Activated naive CD4-positive, alpha-beta T cell treated with anti-CD3 and anti-CD28 coated beads for 36 hours (primary cell): ENCODE measurements at regions of chr18 and their contacts with region 1.

Region 1: GRCh38 chr18:62186774-62187542 is at the starts of genes PIGN and RELCH:
- DNase-seq: peak; percentile 97
- H3K4me3 Mint-ChIP-seq: peak within 1 kb of the TSS; percentile 99
- H3K27ac Mint-ChIP-seq: peak within 1 kb of the TSS; percentile 90
- H3K4me1 Mint-ChIP-seq: peaks cover 45% of the 10 kb centered on the region
- H3K27me3 Mint-ChIP-seq: no peaks in the 10 kb centered on the region
- total RNA-seq, gene PIGN: 21.2 to 22.6 TPM
- total RNA-seq, gene RELCH: 15.7 to 16.3 TPM

Region 2: GRCh38 chr18:61893971-61894750 is 292.8 kb before region 1 on chr18:
- CTCF ChIA-PET with region 1: no interaction called
- intact Hi-C with region 1: loop called (anchors 1 kb)
- DNase-seq: peak; percentile 81
- H3K4me3 Mint-ChIP-seq: peak overlapping the region; percentile 75
- H3K27ac Mint-ChIP-seq: no peak overlapping the region
- H3K4me1 Mint-ChIP-seq: peaks cover 6% of the 10 kb centered on the region
- H3K27me3 Mint-ChIP-seq: peaks cover 28% of the 10 kb centered on the region

Region 3: DNA sequence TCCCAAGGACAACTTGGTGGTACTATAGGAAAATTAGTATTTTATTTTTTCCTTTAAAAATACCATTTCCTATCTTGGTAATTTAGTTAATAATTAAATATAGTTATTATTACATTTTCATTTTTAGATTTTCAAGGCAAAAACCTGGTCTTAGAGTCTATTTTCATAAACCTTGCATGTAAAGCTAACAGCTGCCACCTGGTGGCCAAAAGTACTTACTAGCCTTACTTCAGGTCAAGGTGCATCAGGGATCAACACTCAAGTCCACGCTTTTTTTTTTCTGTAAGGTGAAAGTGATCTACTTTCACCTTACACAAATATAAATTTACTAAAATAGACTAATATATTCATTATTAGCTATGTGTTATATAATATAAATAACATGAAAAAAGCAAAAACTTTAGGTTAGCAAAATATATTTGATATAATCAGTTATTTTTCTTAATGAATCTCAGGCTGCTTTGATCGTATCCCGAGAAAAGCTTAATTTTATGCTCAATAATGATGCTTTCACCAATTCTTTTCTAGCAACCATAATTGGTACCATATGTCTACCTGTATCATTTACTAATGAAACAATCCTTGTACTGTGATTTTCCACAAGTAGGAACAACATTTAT is 62.6 kb after region 1 on chr18:
- CTCF ChIA-PET with region 1: interaction called, 124 read pairs
- intact Hi-C with region 1: loop called (anchors 1 kb)
- DNase-seq: peak; percentile 89
- H3K4me3 Mint-ChIP-seq: no peak overlapping the region
- H3K27ac Mint-ChIP-seq: no peak overlapping the region
- H3K4me1 Mint-ChIP-seq: no peaks in the 10 kb centered on the region
- H3K27me3 Mint-ChIP-seq: no peaks in the 10 kb centered on the region

Region 4: GRCh38 chr18:62505669-62506494 is 318.9 kb after region 1 on chr18:
- CTCF ChIA-PET with region 1: no interaction called
- intact Hi-C with region 1: loop called (anchors 5 kb)
- DNase-seq: peak; percentile 63
- H3K4me3 Mint-ChIP-seq: peak overlapping the region; percentile 55
- H3K27ac Mint-ChIP-seq: peak overlapping the region; percentile 86
- H3K4me1 Mint-ChIP-seq: peaks cover 20% of the 10 kb centered on the region
- H3K27me3 Mint-ChIP-seq: no peaks in the 10 kb centered on the region

Region 5: DNA sequence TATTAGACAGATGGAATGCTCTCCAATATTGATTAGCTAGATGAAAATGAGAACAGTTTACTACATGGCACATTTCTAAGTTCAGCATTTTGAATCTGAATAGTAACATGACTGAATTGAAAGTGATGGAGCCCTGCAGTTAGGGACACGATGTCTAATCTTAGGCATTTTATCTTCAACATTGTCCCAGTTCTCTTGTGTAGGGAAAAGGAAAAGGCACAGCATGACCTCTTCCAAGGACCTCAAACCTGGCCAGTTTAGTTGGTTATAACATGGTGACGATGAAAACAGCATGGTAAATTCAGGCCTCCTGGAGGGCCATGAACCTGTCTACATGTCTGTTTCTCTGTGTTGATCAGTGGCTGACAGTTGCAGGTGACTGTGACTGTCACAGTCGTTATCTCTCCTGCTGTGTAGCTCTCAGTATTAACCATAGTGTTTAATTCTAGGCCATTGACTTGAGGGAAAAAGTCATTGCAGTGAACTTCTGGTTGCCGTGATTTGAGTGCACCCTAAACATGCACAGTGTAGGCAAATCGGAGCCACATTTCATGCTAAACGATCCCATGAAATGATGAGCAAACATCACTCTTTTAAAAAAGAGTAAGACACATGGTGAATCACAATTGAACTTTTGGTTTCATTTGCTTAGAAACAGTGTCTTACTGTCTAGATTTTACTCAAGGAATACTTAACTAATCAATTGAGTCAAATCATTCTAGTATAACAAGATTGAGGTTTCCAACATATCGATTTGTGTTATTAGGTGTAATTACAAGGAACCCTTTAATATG is 658.1 kb after region 1 on chr18:
- CTCF ChIA-PET with region 1: no interaction called
- intact Hi-C with region 1: loop called (anchors 10 kb)
- DNase-seq: peak; percentile 57
- H3K4me3 Mint-ChIP-seq: no peak overlapping the region
- H3K27ac Mint-ChIP-seq: peak overlapping the region; percentile 24
- H3K4me1 Mint-ChIP-seq: peaks cover 24% of the 10 kb centered on the region
- H3K27me3 Mint-ChIP-seq: no peaks in the 10 kb centered on the region

Region 6: GRCh38 chr18:63216516-63217311 is 1029.8 kb after region 1 on chr18:
- CTCF ChIA-PET with region 1: no interaction called
- intact Hi-C with region 1: loop called (anchors 5 kb)
- DNase-seq: peak; percentile 48
- H3K4me3 Mint-ChIP-seq: peak overlapping the region; percentile 64
- H3K27ac Mint-ChIP-seq: peak overlapping the region; percentile 94
- H3K4me1 Mint-ChIP-seq: peaks cover 89% of the 10 kb centered on the region
- H3K27me3 Mint-ChIP-seq: no peaks in the 10 kb centered on the region

Region 7: GRCh38 chr18:63969960-63970802 is 1783.2 kb after region 1 on chr18 and contains the start of gene SERPINB8:
- CTCF ChIA-PET with region 1: no interaction called
- intact Hi-C with region 1: loop called (anchors 10 kb)
- DNase-seq: peak; percentile 91
- H3K4me3 Mint-ChIP-seq: peak within 1 kb of the TSS; percentile 93
- H3K27ac Mint-ChIP-seq: peak within 1 kb of the TSS; percentile 97
- H3K4me1 Mint-ChIP-seq: peaks cover 35% of the 10 kb centered on the region
- H3K27me3 Mint-ChIP-seq: no peaks in the 10 kb centered on the region
- total RNA-seq, gene SERPINB8: 10.5 to 11.7 TPM